ENCODE measurements at regions of chr1 and their contacts with region 1.

Region 1: DNA sequence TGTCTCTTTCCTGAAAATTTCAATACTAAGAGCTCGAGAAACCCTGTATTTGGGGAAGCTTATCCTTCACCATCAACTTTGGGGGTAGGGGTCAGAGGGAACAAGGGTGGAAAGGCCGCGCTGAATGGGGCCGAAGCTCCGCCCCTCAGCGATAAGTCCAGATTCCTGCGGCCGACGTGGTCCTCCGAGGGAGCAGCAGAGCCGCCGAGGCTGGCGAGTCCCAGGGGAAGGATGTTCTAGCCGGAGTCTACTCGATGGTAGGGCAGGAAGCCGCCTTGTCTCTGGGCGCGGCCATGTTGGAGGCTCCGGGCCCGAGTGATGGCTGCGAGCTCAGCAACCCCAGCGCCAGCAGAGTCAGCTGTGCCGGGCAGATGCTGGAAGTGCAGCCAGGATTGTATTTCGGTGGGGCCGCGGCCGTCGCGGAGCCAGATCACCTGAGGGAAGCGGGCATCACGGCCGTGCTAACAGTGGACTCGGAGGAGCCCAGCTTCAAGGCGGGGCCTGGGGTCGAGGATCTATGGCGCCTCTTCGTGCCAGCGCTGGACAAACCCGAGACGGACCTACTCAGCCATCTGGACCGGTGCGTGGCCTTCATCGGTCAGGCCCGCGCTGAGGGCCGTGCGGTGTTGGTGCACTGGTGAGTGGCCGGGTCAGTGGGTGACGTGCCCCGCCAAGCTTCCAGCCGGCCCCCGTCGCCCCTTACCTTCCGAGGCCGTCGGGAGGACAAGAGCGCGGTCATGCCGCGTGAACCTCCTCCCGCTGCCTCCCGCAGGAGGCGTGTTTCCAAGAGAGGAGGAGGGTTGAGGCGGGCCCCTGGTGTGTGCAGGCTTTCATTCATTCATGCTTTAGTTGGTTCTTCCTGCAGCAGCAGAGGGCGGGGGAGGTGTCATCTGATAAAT is at the start of gene DUSP12:
- H3K4me3 ChIP-seq: peak within 1 kb of the TSS; percentile 100
- H3K27ac ChIP-seq: peak within 1 kb of the TSS; percentile 90
- H3K4me1 ChIP-seq: no peaks in the 10 kb centered on the region
- CTCF ChIP-seq: peak; percentile 73

Region 2: GRCh38 chr1:161726596-161727457 is 22.9 kb before region 1 on chr1:
- CTCF ChIA-PET with region 1: no interaction called
- POLR2A ChIA-PET with region 1: interaction called, 19 read pairs
- H3K4me3 ChIP-seq: peak overlapping the region; percentile 62
- H3K27ac ChIP-seq: peak overlapping the region; percentile 70; the same call in 1 of the 2 replicates
- H3K4me1 ChIP-seq: no peaks in the 10 kb centered on the region; the same call in 1 of the 2 replicates
- CTCF ChIP-seq: peak; percentile 79

Region 3: GRCh38 chr1:161738627-161739287 is 11.0 kb before region 1 on chr1:
- CTCF ChIA-PET with region 1: interaction called, 8 read pairs
- POLR2A ChIA-PET with region 1: interaction called, 10 read pairs
- H3K4me3 ChIP-seq: no peak overlapping the region
- H3K27ac ChIP-seq: no peak overlapping the region
- H3K4me1 ChIP-seq: no peaks in the 10 kb centered on the region
- CTCF ChIP-seq: peak; percentile 70

Region 4: DNA sequence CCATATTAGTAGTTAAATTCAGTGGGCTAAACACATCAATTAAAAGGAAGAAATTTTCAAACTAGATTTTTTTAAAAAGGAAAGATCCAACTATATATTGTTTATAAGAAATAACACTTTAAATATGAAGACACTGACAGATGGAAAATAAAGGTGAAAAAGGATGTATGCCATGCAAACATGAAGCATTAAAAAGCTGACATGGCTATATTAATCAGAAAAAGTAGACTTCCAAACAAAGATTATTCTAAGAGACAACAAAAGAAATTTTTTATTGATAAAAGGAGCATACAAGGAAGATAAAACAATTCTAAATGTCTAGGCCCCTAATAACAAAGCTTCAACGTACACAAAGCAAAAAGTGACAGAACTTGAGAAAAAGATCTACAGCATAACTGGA is 108.5 kb after region 1 on chr1:
- CTCF ChIA-PET with region 1: no interaction called
- POLR2A ChIA-PET with region 1: no interaction called
- H3K4me3 ChIP-seq: no peak overlapping the region
- H3K27ac ChIP-seq: no peak overlapping the region
- H3K4me1 ChIP-seq: no peaks in the 10 kb centered on the region
- CTCF ChIP-seq: no peak

Region 5: DNA sequence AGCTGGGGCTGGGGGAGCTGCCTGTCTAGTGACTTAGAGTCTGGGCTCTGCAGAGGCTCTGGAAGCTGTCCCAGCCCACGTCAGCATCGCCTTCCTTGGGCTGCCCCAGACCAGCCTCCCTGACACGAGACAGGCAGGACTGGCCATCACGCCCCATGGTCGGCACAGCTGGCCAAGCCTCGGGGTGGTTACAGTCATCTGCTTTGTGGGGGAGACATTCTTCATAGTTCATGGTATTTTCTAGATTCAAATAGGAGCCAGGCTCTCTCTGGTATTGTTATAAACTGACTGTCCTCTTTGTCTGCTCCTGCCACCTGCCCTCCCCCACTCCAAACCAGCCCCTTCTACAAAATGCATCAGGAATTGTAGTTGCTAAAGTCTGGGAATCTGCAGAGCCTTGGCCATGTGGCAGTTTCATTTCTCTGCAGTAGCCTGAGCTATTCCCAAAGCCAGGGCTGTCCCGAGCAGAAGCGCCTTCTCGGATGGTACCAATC is 244.5 kb after region 1 on chr1:
- CTCF ChIA-PET with region 1: no interaction called
- POLR2A ChIA-PET with region 1: interaction called, 12 read pairs
- H3K4me3 ChIP-seq: no peak overlapping the region
- H3K27ac ChIP-seq: no peak overlapping the region
- H3K4me1 ChIP-seq: no peaks in the 10 kb centered on the region
- CTCF ChIP-seq: no peak

Measured in HEK293 (cell line).